ENCODE measurements at regions of chr1 and their contacts with region 1.

Region 1: GRCh38 chr1:32013386-32014198 is at the start of gene KHDRBS1:
- DNase-seq: peak; percentile 100
- H3K4me3 ChIP-seq: peak within 1 kb of the TSS; percentile 54 to 98 (median 94)
- H3K27ac ChIP-seq: peak within 1 kb of the TSS; percentile 96
- H3K4me1 ChIP-seq: peaks cover 22% of the 10 kb centered on the region
- H3K27me3 ChIP-seq: no peaks in the 10 kb centered on the region
- CTCF ChIP-seq: no peak
- POLR2A ChIP-seq: peak; percentile 67
- total RNA-seq, gene KHDRBS1: 185 and 194 TPM in 2 replicates

Region 2: DNA sequence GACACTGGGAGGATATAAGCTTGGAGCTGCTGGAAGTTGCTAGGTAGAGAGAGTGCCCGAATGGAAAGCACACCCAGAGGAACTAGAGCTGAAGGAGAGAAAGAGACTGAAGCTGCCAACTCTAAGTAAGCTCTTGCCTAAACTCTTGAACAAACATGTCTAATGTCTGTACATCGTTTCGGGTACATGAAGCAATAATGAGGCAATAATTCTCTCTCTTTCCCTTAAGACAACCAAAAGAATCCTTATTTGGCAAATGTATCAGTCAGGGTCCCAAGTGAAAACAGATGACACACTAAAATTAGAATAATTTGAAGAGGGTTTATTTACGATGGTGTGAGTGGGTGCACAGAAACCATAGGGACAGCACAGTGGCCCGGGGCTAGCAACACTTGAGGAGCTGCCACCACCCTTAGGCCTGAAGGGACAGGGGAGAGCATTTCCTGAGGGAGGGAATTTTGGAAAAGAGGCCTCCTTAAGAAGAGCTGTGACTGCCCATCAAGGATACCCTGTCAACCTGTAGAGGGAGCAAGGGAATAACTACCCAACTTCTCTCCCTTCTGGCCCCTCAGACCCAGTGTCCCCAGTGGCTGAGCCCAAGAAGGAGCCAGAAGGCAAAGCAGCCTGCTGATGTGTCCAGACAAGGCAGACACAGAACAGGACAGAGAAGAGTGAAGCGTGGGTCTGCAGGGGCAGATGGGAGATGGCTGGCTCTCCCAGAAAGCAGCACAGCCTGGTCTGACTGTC is 36.0 kb before region 1 on chr1:
- CTCF ChIA-PET with region 1: no interaction called
- POLR2A ChIA-PET with region 1: no interaction called
- dilution Hi-C with region 1: no loop called
- intact Hi-C with region 1: no loop called
- DNase-seq: peak; percentile 44
- H3K4me3 ChIP-seq: no peak overlapping the region
- H3K27ac ChIP-seq: no peak overlapping the region
- H3K4me1 ChIP-seq: peaks cover 4% of the 10 kb centered on the region
- H3K27me3 ChIP-seq: no peaks in the 10 kb centered on the region
- CTCF ChIP-seq: peak; percentile 14 to 48
- POLR2A ChIP-seq: no peak

Region 3: DNA sequence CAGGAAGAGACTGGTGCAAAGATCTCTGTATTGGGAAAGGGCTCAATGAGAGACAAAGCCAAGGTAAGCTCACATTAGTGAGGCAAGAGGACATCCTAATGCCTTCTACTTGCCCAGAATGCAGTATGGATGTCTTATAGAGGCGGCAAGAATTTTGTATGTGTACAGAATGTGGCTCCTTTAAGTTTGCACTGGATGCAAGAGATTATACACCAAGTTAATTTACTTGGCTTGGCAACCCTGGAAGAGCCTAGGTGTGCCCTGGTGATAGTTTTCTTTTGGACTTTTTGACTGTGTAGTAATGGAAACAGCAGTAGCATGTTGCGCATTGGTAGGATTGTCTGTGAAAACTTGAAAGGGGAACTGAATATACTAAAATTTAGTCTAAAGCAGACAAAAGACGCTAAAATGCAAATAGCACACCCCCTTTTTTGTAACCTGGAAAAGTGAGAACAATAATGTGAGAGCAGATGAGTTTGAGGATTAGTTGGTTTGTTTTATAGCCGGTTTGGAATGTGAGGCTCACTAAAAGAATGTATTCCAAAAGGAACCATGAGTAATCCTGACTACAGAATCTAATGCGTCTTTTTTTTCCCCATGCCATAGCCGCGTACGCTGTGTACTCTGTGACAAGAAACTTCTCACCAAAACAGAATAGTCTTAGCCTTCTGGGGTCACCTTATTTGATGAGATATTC is 18.1 kb after region 1 on chr1:
- CTCF ChIA-PET with region 1: interaction called, 4 read pairs
- POLR2A ChIA-PET with region 1: interaction called, 4 read pairs
- dilution Hi-C with region 1: no loop called
- intact Hi-C with region 1: loop called (anchors 2 kb)
- DNase-seq: peak; percentile 49
- H3K4me3 ChIP-seq: no peak overlapping the region
- H3K27ac ChIP-seq: peak overlapping the region; percentile 31
- H3K4me1 ChIP-seq: peaks cover 16% of the 10 kb centered on the region
- H3K27me3 ChIP-seq: no peaks in the 10 kb centered on the region
- CTCF ChIP-seq: no peak
- POLR2A ChIP-seq: no peak

Region 4: GRCh38 chr1:32072622-32073298 is 59.2 kb after region 1 on chr1 and contains the start of gene TMEM39B:
- CTCF ChIA-PET with region 1: no interaction called
- POLR2A ChIA-PET with region 1: interaction called, 3 read pairs
- dilution Hi-C with region 1: no loop called
- intact Hi-C with region 1: loop called (anchors 2 kb)
- DNase-seq: peak; percentile 94
- H3K4me3 ChIP-seq: peak within 1 kb of the TSS; percentile 74 to 78 (median 77)
- H3K27ac ChIP-seq: peak within 1 kb of the TSS; percentile 93
- H3K4me1 ChIP-seq: peaks cover 43% of the 10 kb centered on the region
- H3K27me3 ChIP-seq: no peaks in the 10 kb centered on the region
- CTCF ChIP-seq: no peak
- POLR2A ChIP-seq: peak; percentile 76
- total RNA-seq, gene TMEM39B: 43.7 and 47.3 TPM in 2 replicates